ENCODE measurements at regions of chr19 and their contacts with region 1.

Region 1: DNA sequence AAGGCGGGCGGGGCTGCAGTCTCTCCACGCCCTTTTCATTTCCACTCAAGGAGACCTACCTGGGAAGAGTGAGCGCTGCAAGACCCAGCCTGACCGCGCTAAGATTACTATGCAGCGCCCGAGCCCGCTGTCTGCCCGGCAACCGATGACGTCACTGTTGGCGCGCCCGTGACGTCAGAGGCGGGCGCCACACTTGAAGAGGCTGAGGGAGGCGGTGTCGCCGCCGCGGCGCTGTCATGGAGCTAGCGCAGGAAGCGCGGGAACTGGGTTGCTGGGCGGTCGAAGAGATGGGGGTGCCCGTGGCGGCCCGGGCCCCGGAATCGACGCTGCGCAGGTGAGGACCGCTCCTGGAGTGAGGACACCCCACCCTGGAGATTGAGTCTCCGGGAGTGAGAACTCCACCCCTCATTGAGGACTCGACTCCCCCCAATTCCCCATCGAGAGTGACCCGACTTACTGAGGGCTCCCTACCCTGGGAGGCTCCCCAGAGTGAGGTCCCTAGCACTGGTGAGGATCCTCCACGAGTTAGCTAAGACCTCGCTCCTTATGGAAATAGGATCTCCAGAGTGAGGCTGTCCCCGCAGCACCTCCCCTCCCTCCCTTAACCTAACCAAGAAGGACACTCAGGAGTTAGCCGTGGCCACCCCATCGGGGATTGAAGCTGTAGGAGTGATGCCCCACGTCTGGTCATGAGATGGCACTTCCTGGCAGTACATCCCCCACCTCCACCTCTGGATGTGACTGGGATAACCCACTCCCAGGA is at the start of gene HAUS5:
- DNase-seq: peak; percentile 96
- H3K4me3 ChIP-seq: peak within 1 kb of the TSS; percentile 49 to 79 (median 62)
- H3K27ac ChIP-seq: peak within 1 kb of the TSS; percentile 44 to 76 (median 68)
- H3K4me1 ChIP-seq: peaks cover 0 to 14% (median 10%) of the 10 kb centered on the region in 4 donors
- H3K27me3 ChIP-seq: no peaks in the 10 kb centered on the region
- CTCF ChIP-seq: no peak
- EP300 ChIP-seq: no peak
- POLR2A ChIP-seq: peak in 1 of 2 donors; percentile 11
- total RNA-seq, gene HAUS5: 4.6 to 9.6 (median 6.1) TPM

Region 2: GRCh38 chr19:35269421-35270117 is 343.2 kb before region 1 on chr19:
- intact Hi-C with region 1: loop called (anchors 10 kb)
- DNase-seq: peak; percentile 92
- H3K4me3 ChIP-seq: peak overlapping the region; percentile 51 to 75 (median 70)
- H3K27ac ChIP-seq: peak overlapping the region; percentile 91 to 95 (median 92)
- H3K4me1 ChIP-seq: peaks cover 0 to 40% (median 28%) of the 10 kb centered on the region in 4 donors
- H3K27me3 ChIP-seq: no peaks in the 10 kb centered on the region
- CTCF ChIP-seq: peak in 2 of 4 experiments; percentile 23 to 78
- EP300 ChIP-seq: no peak
- POLR2A ChIP-seq: no peak

Region 3: DNA sequence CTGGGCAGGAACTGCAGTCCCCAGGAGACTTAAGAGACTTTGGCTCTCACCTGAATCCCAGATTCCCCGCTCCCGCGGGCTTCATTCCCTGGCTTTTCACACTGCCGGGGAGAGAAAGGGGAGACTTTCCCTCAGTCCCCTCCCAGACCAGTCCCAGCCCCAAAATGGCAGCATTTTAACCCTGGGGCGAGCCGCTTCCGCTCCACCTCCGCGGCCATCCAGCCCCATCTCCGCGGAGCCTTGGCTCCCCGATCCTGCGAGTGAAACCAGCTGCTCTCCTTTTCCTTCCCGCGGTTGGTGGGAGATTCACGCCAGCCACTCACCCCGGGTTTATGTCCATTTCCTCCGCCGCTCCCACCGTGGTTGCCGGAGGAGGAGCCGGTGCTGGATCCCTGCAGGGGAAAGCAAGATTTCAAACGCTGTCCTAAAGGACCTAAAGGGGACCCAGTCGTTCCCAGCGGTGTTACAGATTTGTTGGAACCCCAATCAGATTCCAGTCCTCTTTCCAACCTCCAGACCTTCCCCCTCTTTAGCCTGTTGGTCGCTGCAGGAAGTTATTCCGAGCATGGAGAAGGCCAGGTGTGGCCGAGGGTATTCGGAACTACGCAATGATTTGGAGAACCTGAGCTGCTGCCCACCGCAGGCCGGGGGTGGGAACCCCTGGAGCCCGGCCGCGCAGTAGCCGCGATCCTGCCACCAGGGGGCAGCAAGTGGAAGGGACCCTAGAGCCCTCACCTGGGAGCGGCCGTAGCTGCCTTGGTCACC is 102.7 kb before region 1 on chr19:
- intact Hi-C with region 1: no loop called
- DNase-seq: peak; percentile 83
- H3K4me3 ChIP-seq: peak overlapping the region; percentile 11 to 37 (median 30)
- H3K27ac ChIP-seq: peak overlapping the region in 3 of 4 donors; percentile 6 to 27 (median 15)
- H3K4me1 ChIP-seq: peaks cover 0 to 15% (median 11%) of the 10 kb centered on the region in 4 donors
- H3K27me3 ChIP-seq: peaks cover 8 to 85% (median 61%) of the 10 kb centered on the region in 3 donors
- CTCF ChIP-seq: peak; percentile 72 to 87 (median 80)
- EP300 ChIP-seq: no peak
- POLR2A ChIP-seq: no peak

Region 4: DNA sequence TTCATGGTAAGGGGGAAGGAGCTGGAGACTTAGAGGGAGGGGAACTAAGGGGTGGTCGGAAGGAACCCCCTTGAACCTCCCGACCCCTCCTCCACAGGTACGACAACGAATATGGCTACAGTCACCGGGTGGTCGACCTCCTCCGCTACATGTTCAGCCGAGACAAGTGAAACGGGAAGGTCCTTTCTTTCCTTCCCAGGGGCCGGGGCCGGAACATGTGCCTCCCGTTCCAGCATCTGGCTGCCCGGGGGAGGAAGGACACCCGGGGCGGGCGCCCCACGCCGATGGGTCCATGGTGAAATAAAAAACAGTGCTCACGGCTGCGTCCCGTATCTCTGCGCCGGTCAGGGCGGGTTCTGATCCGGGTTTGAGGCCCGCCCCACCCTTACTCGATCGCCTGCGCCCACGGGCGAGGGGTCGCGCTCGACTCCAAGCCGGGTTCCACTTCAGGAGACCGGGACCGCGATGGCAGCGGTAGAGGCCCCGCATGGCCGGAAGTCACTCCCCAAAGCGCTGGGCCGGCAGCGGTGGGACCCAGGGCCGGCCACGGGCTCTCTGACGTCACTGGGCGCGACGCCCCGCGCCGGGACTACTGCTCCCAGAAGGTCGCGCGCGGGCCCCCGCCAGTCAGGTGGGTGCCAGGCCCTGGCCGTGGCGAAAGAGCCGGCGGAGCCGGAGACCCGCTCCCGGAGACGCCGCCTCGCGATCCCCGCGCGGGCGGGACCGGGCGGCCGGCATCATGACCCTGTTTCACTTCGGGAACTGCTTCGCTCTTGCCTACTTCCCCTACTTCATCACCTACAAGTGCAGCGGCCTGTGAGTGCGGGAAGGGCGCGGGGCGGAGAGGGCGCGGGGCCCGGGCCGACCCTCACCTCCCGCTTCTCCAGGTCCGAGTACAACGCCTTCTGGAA is 67.5 kb before region 1 on chr19 and contains the start of gene TMEM147:
- intact Hi-C with region 1: loop called (anchors 5 kb)
- DNase-seq: peak; percentile 96
- H3K4me3 ChIP-seq: peak within 1 kb of the TSS; percentile 68 to 97 (median 90)
- H3K27ac ChIP-seq: peak within 1 kb of the TSS; percentile 79 to 90 (median 88)
- H3K4me1 ChIP-seq: peaks cover 0 to 29% (median 26%) of the 10 kb centered on the region in 4 donors
- H3K27me3 ChIP-seq: no peaks in the 10 kb centered on the region
- CTCF ChIP-seq: no peak
- EP300 ChIP-seq: peak in 1 of 4 donors; percentile 59
- POLR2A ChIP-seq: peak in 1 of 2 donors; percentile 23
- total RNA-seq, gene TMEM147: 60.1 to 72.5 (median 69.3) TPM

Region 5: DNA sequence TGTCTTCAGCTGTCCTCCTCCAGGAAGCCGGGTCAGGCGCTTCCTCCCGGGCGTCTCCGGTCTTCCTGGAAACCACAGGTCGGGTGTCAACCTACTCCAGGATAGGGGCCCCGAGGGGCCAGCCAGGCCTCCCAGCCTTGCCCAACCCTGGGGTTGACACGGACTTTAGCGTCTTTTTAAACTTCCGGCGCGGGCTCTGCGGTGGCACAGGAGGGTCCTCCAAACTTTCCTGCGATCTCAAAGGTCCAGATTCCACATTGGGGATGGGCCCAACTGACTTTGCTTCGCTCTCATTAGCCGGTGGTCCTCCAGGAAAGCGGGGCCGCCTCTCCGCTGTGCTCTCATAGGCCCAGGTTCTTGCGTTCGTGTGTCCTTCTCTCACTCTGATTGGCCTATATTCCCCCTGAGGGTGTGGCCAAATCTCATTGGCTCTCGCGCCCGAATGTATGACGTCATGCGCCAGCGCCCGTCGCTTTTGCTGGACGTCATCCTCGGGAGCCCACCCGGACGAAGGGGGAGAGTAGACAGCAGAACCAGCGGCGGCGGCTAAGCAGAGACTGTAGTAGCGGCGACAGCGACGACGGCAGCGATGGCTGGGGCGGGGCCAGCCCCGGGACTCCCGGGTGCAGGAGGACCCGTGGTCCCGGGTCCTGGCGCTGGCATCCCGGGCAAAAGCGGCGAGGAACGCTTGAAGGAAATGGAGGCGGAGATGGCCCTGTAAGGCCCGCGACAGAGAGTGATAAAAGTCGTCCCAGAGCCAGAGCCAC is 16.0 kb after region 1 on chr19 and contains the start of gene RBM42:
- intact Hi-C with region 1: loop called (anchors 1 kb)
- DNase-seq: peak; percentile 99
- H3K4me3 ChIP-seq: peak within 1 kb of the TSS; percentile 70 to 99 (median 86)
- H3K27ac ChIP-seq: peak within 1 kb of the TSS; percentile 90 to 98 (median 94)
- H3K4me1 ChIP-seq: peaks cover 0 to 22% (median 18%) of the 10 kb centered on the region in 4 donors
- H3K27me3 ChIP-seq: no peaks in the 10 kb centered on the region
- CTCF ChIP-seq: no peak
- EP300 ChIP-seq: peak in 2 of 4 donors; percentile 21 to 31
- POLR2A ChIP-seq: peak; percentile 55 to 66
- total RNA-seq, gene RBM42: 43.5 to 61.2 (median 53.2) TPM

Region 6: DNA sequence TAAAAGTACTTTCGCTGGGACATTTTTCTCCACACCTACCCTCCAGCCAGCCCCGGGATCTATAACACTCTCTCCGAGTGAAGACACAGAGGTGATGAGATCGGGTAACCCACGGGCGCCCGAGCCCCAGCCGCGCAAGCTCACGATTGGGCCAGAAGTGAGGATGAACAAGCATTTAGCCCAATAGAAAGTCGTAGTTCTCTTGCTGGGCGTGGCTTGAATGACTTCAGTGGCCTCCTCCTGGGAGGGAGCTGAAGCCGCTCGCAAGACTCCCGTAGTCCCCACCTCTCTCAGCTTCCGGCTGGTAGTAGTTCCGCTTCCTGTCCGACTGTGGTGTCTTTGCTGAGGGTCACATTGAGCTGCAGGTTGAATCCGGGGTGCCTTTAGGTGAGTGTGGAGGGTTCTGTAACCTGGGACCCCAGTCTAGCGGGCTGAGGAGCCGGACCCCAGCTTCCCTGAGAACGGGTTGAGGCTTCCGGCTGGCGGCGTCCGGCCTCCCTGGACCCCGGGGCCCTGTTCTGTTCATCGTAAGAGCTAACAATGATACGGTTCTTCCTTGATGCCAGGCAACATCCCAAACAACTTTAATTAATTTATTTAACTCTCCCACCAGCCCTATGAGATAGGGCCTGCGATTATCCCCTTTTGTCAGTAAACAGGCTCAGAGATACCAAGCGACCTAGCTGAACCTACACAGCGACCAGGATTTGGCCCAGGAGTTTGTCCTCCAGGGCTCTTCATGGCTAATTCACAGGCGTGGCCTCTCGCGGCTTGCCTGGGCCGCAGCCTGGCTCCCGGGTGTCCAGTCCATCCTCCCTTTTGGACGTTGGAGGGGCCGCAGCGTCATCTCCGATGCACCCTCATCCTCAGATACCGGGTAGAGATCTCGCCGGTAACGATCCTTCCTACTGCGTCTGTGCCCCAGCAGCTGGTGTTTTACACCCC is 35.5 kb after region 1 on chr19 and contains the start of gene COX6B1:
- intact Hi-C with region 1: no loop called
- DNase-seq: peak; percentile 98
- H3K4me3 ChIP-seq: peak within 1 kb of the TSS; percentile 63 to 87 (median 81)
- H3K27ac ChIP-seq: peak within 1 kb of the TSS; percentile 85 to 96 (median 91)
- H3K4me1 ChIP-seq: peaks cover 0 to 53% (median 41%) of the 10 kb centered on the region in 4 donors
- H3K27me3 ChIP-seq: no peaks in the 10 kb centered on the region
- CTCF ChIP-seq: no peak
- EP300 ChIP-seq: peak in 1 of 4 donors; percentile 7
- POLR2A ChIP-seq: peak; percentile 67 to 86
- total RNA-seq, gene COX6B1: 593 to 780 (median 696) TPM

Region 7: DNA sequence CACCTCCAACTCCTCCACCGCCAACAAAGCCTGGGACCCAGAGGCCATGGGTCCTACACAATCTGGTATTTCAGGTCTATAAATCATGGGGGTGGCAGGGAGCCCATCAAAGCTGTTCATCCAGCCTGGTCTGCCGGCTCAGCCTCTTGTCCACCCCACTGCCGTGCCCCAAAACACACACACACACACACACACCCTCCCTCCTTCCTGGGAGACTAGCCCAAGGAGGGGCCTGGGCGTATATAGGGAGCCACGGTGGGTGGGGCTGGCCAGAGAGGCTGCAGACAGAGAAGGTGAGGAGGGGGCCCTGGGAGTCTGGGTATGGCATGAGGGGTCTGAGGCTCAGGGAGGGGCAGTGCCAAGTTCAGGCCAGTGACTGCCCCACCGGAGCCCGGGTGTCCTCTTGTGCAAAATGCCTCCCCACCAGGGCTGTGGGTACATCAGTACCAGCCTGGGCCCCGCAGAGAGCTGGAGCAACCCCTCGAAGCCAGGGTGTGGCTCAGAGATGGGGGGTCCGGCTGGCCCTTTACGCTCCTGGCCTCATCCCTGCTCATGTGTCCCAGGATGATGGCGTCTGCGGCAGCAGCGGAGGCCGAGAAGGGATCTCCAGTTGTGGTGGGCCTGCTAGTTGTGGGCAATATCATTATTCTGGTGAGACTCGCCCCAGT is 53.6 kb after region 1 on chr19 and contains the start of gene UPK1A:
- intact Hi-C with region 1: no loop called
- DNase-seq: no peak
- H3K4me3 ChIP-seq: no peak within 1 kb of the TSS
- H3K27ac ChIP-seq: no peak within 1 kb of the TSS
- H3K4me1 ChIP-seq: no peaks in the 10 kb centered on the region
- H3K27me3 ChIP-seq: no peaks in the 10 kb centered on the region
- CTCF ChIP-seq: no peak
- EP300 ChIP-seq: no peak
- POLR2A ChIP-seq: no peak
- total RNA-seq, gene UPK1A: 0.55 TPM in 1 of 4 donors, not detected in the others